Heart left ventricle (tissue), 16 donors: ENCODE measurements at regions of chr2 and their contacts with region 1.

Region 1: GRCh38 chr2:39913648-39914461 is 134.8 kb upstream of the THUMPD2 start:
- DNase-seq: peak in 1 of 5 donors; percentile 23
- ATAC-seq: peak in 3 of 4 donors; percentile 70 to 79 (median 72)
- H3K4me3 ChIP-seq: no peak overlapping the region
- H3K27ac ChIP-seq: peak overlapping the region in 1 of 12 donors; percentile 18
- H3K4me1 ChIP-seq: peaks cover 0 to 10% (median 2%) of the 10 kb centered on the region in 12 donors
- H3K27me3 ChIP-seq: peaks cover 0 to 2% (median 0%) of the 10 kb centered on the region in 9 donors
- CTCF ChIP-seq: peak; percentile 61 to 89 (median 81)
- POLR2A ChIP-seq: no peak

Region 2: GRCh38 chr2:39772086-39772811 is 141.6 kb before region 1 on chr2:
- intact Hi-C with region 1: no loop called
- DNase-seq: no peak
- ATAC-seq: peak in 3 of 4 donors; percentile 11 to 34 (median 28)
- H3K4me3 ChIP-seq: no peak overlapping the region
- H3K27ac ChIP-seq: peak overlapping the region in 1 of 12 donors; percentile 27
- H3K4me1 ChIP-seq: peaks cover 0 to 67% (median 26%) of the 10 kb centered on the region in 12 donors
- H3K27me3 ChIP-seq: no peaks in the 10 kb centered on the region
- CTCF ChIP-seq: no peak
- POLR2A ChIP-seq: no peak

Region 3: GRCh38 chr2:40448468-40449079 is 534.7 kb after region 1 on chr2:
- intact Hi-C with region 1: loop called in 1 of 10 experiments (anchors 10 kb)
- DNase-seq: no peak
- ATAC-seq: no peak
- H3K4me3 ChIP-seq: no peak overlapping the region
- H3K27ac ChIP-seq: peak overlapping the region in 7 of 12 donors; percentile 3 to 91 (median 21)
- H3K4me1 ChIP-seq: peaks cover 0 to 77% (median 48%) of the 10 kb centered on the region in 12 donors
- H3K27me3 ChIP-seq: no peaks in the 10 kb centered on the region
- CTCF ChIP-seq: peak; percentile 32 to 67 (median 56)
- POLR2A ChIP-seq: no peak

Region 4: DNA sequence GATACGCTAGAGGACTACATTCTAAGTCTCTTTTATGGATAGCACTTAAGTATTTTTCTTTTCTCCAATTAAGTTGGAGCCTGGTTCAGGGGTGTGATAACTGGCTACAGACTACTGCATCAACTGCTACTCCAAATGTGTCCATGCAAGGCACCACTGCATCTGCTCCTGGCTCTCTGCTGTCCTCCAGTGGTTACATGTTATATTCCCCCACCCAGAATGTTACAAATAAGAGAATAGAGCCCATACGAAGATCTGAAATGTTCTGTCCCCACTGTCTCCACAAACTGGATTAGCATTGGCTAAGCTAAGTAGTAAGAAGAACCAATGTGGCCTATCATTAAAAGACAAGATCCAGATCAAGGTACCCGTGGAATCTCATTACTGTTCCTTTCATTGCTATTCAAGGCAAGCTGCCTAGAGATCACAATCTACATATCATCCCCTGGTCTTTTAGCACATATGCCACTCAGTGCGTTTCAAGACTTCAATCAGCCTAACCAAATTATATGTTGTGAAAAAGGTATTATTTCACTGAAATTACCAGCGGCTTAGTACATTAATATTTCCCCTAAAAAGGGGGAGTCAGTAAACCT is 846.3 kb after region 1 on chr2:
- intact Hi-C with region 1: loop called in 6 of 10 experiments (anchors 5 to 10 kb)
- DNase-seq: peak in 4 of 5 donors; percentile 29 to 47 (median 33)
- ATAC-seq: peak; percentile 51 to 93 (median 89)
- H3K4me3 ChIP-seq: no peak overlapping the region
- H3K27ac ChIP-seq: peak overlapping the region in 1 of 12 donors; percentile 19
- H3K4me1 ChIP-seq: peaks cover 0 to 14% (median 6%) of the 10 kb centered on the region in 12 donors
- H3K27me3 ChIP-seq: no peaks in the 10 kb centered on the region
- CTCF ChIP-seq: peak; percentile 55 to 78 (median 66)
- POLR2A ChIP-seq: no peak

Region 5: DNA sequence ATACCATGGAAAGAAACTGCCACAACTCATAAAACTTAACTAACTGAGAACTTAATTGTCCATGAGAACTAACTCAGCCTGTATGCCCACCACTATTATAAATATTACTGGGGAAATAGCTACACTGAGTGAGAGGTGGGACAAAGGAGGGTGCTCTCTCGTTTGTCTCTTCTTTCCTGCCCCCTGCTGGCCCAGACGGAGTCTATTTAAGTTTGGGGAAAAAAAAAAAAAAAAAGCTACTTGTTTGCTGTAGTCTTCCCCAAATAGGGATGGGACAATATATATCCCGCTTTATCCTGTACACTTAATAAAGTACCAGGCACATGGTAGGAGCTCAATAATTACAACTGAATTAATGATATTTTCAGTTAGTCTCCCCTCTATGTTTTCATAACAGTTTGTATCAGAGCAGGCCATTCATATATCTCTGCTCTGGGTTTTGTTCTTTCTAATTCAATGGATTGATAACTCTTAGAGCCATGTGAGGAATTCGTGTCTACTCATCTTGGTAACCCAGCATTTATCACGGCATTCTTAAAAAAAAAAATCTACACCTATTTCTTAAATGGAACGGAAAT is 1486.3 kb after region 1 on chr2:
- intact Hi-C with region 1: loop called in 1 of 10 experiments (anchors 10 kb)
- DNase-seq: no peak
- ATAC-seq: no peak
- H3K4me3 ChIP-seq: no peak overlapping the region
- H3K27ac ChIP-seq: no peak overlapping the region
- H3K4me1 ChIP-seq: no peaks in the 10 kb centered on the region
- H3K27me3 ChIP-seq: no peaks in the 10 kb centered on the region
- CTCF ChIP-seq: peak in 7 of 12 donors; percentile 15 to 39 (median 32)
- POLR2A ChIP-seq: no peak

Region 6: DNA sequence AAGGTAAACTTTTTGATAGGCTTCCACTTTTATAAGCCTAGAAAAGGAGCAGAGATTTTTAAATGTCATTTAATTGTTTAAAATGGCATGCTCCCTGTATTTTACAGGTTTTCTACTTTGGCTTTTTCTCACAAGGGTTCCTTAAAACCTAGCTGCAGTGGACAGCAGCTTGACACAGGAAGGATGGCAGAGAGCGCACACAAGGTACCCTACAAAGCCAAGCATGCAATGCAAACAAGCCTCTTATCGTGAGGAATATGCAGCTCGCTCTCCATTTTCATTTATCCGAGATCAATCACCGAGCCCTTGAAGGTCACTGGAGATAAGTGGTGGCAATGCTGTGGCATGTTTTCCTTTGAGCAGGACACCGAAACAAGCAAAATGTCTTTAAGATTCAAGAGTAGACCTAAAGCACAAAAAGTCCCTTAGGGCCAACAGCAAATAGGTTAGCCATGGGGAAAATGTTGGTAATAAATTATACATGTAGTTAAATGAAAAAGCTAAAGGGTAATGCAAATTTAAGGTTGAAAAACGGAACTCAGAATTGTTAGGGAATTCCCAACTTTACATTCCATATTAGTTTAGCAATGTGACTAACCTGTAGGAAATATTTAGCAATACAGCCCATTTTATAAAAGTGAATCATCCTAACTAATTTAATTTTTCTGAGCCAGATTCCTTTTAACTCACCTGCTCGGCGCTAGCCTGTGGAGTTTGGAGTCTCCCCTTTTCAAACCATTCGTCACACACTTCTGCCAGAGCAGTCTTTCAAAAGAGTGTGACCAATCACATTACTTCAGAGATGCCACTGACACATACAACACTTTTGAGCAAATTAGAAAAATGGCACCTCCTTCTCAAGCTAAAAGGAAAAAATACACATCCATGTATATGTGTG is 1796.1 kb after region 1 on chr2:
- intact Hi-C with region 1: loop called in 1 of 10 experiments (anchors 10 kb)
- DNase-seq: no peak
- ATAC-seq: no peak
- H3K4me3 ChIP-seq: no peak overlapping the region
- H3K27ac ChIP-seq: no peak overlapping the region
- H3K4me1 ChIP-seq: peaks cover 0 to 7% (median 0%) of the 10 kb centered on the region in 12 donors
- H3K27me3 ChIP-seq: no peaks in the 10 kb centered on the region
- CTCF ChIP-seq: no peak
- POLR2A ChIP-seq: no peak